ENCODE measurements at regions of chr6 and their contacts with region 1.

Region 1: DNA sequence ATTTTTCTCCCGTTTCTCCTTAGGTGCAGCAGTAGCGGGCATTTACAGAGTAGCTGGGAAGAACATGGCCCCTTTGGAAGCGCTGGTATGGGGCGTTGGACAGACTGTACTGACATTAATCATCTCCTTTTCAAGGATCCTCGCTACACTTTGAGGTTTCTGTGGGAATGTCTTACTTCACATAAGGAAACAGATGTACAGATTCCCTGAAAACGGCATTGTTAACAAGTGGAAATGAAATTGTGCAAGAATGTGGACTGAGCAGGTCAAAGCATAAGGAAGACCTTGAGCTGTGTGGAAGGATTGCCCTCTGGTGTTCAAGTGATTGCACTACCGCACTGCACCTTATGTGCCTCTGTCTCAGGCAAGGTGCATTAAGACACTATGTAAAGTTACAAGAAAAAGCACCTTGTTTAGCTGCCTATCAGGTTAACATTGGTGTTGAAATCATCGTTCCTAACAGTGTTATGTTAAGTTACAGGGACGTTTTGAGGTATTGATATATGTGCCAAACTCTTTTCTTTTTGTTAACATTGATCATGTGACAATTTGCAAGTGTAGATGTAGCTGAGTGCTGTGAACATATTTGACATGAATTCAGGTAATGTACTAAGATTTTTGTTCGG is 38.0 kb downstream of the TMEM170B start:
- DNase-seq: peak in 1 of 2 donors; percentile 73
- ATAC-seq: peak; percentile 85 to 99 (median 90)
- H3K4me3 ChIP-seq: no peak overlapping the region
- H3K4me3 Mint-ChIP-seq: no peak overlapping the region
- H3K27ac ChIP-seq: no peak overlapping the region
- H3K27ac Mint-ChIP-seq: no peak overlapping the region
- H3K4me1 ChIP-seq: no peaks in the 10 kb centered on the region
- H3K4me1 Mint-ChIP-seq: no peaks in the 10 kb centered on the region
- H3K27me3 ChIP-seq: no peaks in the 10 kb centered on the region
- H3K27me3 Mint-ChIP-seq: no peaks in the 10 kb centered on the region
- CTCF ChIP-seq: peak; percentile 66

Region 2: GRCh38 chr6:11144393-11144851 is 431.1 kb before region 1 on chr6:
- intact Hi-C with region 1: loop called (anchors 1 kb)
- DNase-seq: peak; percentile 63 to 86
- ATAC-seq: peak; percentile 82 to 97 (median 96)
- H3K4me3 ChIP-seq: no peak overlapping the region
- H3K4me3 Mint-ChIP-seq: no peak overlapping the region
- H3K27ac ChIP-seq: no peak overlapping the region
- H3K27ac Mint-ChIP-seq: no peak overlapping the region
- H3K4me1 ChIP-seq: peaks cover 3% of the 10 kb centered on the region
- H3K4me1 Mint-ChIP-seq: peaks cover 4 to 5% of the 10 kb centered on the region in 2 donors
- H3K27me3 ChIP-seq: no peaks in the 10 kb centered on the region
- H3K27me3 Mint-ChIP-seq: no peaks in the 10 kb centered on the region
- CTCF ChIP-seq: peak; percentile 86

Measured in natural killer cell (primary cell).